CD8-positive, alpha-beta T cell (primary cell): ENCODE measurements at regions of chr3 and their contacts with region 1.

Region 1: GRCh38 chr3:153161138-153161713 is 800 bp upstream of the RAP2B start:
- DNase-seq: peak; percentile 79 to 97 (median 90)
- ATAC-seq: peak; percentile 78
- H3K4me3 ChIP-seq: peak overlapping the region; percentile 69 to 75
- H3K4me3 Mint-ChIP-seq: peak overlapping the region; percentile 99
- H3K27ac ChIP-seq: peak overlapping the region; percentile 62 to 74
- H3K27ac Mint-ChIP-seq: peak overlapping the region; percentile 95
- H3K4me1 ChIP-seq: peaks cover 24% of the 10 kb centered on the region
- H3K4me1 Mint-ChIP-seq: peaks cover 34% of the 10 kb centered on the region
- H3K27me3 ChIP-seq: no peaks in the 10 kb centered on the region
- H3K27me3 Mint-ChIP-seq: no peaks in the 10 kb centered on the region
- CTCF ChIP-seq: no peak

Region 2: DNA sequence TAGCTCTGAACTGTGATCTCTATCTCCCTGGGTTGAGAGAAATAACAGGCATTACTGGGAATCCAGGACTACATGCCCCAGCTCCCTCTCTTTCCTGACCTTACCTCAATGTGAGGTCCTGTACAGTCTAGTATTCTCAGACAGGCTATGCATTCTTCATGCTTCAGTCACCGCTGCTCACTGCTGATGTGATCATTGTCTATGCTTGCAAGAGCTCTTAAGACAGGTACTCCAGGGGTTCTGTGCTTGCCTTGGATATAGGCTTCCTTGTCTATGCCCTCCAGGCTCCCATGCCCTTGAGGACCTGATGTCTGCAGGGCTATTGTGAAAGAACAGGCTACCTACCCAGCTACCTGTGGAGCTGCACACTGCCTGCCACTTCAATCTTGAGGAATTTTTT is 708.9 kb before region 1 on chr3:
- CTCF ChIA-PET with region 1: no interaction called
- POLR2A ChIA-PET with region 1: no interaction called
- intact Hi-C with region 1: no loop called
- DNase-seq: no peak
- ATAC-seq: no peak
- H3K4me3 ChIP-seq: no peak overlapping the region
- H3K4me3 Mint-ChIP-seq: no peak overlapping the region
- H3K27ac ChIP-seq: peak overlapping the region in 1 of 2 experiments; percentile 23
- H3K27ac Mint-ChIP-seq: peak overlapping the region; percentile 72
- H3K4me1 ChIP-seq: peaks cover 31% of the 10 kb centered on the region
- H3K4me1 Mint-ChIP-seq: peaks cover 56% of the 10 kb centered on the region
- H3K27me3 ChIP-seq: no peaks in the 10 kb centered on the region
- H3K27me3 Mint-ChIP-seq: no peaks in the 10 kb centered on the region
- CTCF ChIP-seq: no peak

Region 3: GRCh38 chr3:152606146-152606545 is 555.1 kb before region 1 on chr3:
- CTCF ChIA-PET with region 1: no interaction called
- POLR2A ChIA-PET with region 1: no interaction called
- intact Hi-C with region 1: no loop called
- DNase-seq: no peak
- ATAC-seq: no peak
- H3K4me3 ChIP-seq: no peak overlapping the region
- H3K4me3 Mint-ChIP-seq: no peak overlapping the region
- H3K27ac ChIP-seq: no peak overlapping the region
- H3K27ac Mint-ChIP-seq: no peak overlapping the region
- H3K4me1 ChIP-seq: no peaks in the 10 kb centered on the region
- H3K4me1 Mint-ChIP-seq: no peaks in the 10 kb centered on the region
- H3K27me3 ChIP-seq: no peaks in the 10 kb centered on the region
- H3K27me3 Mint-ChIP-seq: no peaks in the 10 kb centered on the region
- CTCF ChIP-seq: no peak

Region 4: GRCh38 chr3:153043729-153044328 is 117.4 kb before region 1 on chr3:
- CTCF ChIA-PET with region 1: interaction called, 12 read pairs
- POLR2A ChIA-PET with region 1: interaction called, 4 read pairs
- intact Hi-C with region 1: loop called (anchors 1 to 5 kb)
- DNase-seq: no peak
- ATAC-seq: no peak
- H3K4me3 ChIP-seq: no peak overlapping the region
- H3K4me3 Mint-ChIP-seq: no peak overlapping the region
- H3K27ac ChIP-seq: no peak overlapping the region
- H3K27ac Mint-ChIP-seq: no peak overlapping the region
- H3K4me1 ChIP-seq: no peaks in the 10 kb centered on the region
- H3K4me1 Mint-ChIP-seq: peaks cover 2% of the 10 kb centered on the region
- H3K27me3 ChIP-seq: no peaks in the 10 kb centered on the region
- H3K27me3 Mint-ChIP-seq: peaks cover 5% of the 10 kb centered on the region
- CTCF ChIP-seq: no peak

Region 5: DNA sequence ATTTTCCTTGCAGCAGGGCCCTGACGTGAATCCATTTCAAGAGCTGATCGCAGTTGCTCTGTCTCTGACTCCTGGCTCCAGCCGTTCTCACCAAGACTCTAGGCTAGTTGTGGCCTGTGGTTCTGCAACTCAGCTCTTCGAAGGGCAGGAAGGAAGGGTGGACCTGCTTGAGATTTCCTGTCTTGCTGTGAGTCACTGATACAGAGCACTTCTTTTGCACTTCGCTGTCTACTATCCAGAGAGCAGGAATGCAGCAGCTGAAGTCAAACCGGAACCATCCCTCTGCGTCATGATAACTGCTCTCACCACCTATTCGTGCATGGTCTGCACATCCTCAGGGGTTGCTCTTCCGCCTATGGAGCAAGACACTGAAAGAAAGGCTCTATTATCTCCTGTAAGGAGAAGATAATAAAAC is 60.5 kb after region 1 on chr3:
- CTCF ChIA-PET with region 1: interaction called, 5 read pairs
- POLR2A ChIA-PET with region 1: interaction called, 51 read pairs
- intact Hi-C with region 1: loop called (anchors 1 to 2 kb)
- DNase-seq: peak; percentile 62 to 96 (median 81)
- ATAC-seq: peak; percentile 93
- H3K4me3 ChIP-seq: peak overlapping the region; percentile 3 to 10
- H3K4me3 Mint-ChIP-seq: peak overlapping the region; percentile 67
- H3K27ac ChIP-seq: peak overlapping the region; percentile 64 to 96
- H3K27ac Mint-ChIP-seq: peak overlapping the region; percentile 94
- H3K4me1 ChIP-seq: peaks cover 68% of the 10 kb centered on the region
- H3K4me1 Mint-ChIP-seq: peaks cover 68% of the 10 kb centered on the region
- H3K27me3 ChIP-seq: no peaks in the 10 kb centered on the region
- H3K27me3 Mint-ChIP-seq: no peaks in the 10 kb centered on the region
- CTCF ChIP-seq: no peak

Region 6: GRCh38 chr3:153574445-153574844 is 413.2 kb after region 1 on chr3:
- CTCF ChIA-PET with region 1: no interaction called
- POLR2A ChIA-PET with region 1: no interaction called
- intact Hi-C with region 1: no loop called
- DNase-seq: no peak
- ATAC-seq: no peak
- H3K4me3 ChIP-seq: no peak overlapping the region
- H3K4me3 Mint-ChIP-seq: no peak overlapping the region
- H3K27ac ChIP-seq: no peak overlapping the region
- H3K27ac Mint-ChIP-seq: no peak overlapping the region
- H3K4me1 ChIP-seq: no peaks in the 10 kb centered on the region
- H3K4me1 Mint-ChIP-seq: no peaks in the 10 kb centered on the region
- H3K27me3 ChIP-seq: no peaks in the 10 kb centered on the region
- H3K27me3 Mint-ChIP-seq: no peaks in the 10 kb centered on the region
- CTCF ChIP-seq: no peak

Region 7: GRCh38 chr3:153595186-153595815 is 434.1 kb after region 1 on chr3:
- CTCF ChIA-PET with region 1: interaction called, 3 read pairs
- POLR2A ChIA-PET with region 1: no interaction called
- intact Hi-C with region 1: loop called (anchors 2 to 5 kb)
- DNase-seq: peak in 2 of 9 experiments; percentile 38 to 49
- ATAC-seq: no peak
- H3K4me3 ChIP-seq: no peak overlapping the region
- H3K4me3 Mint-ChIP-seq: no peak overlapping the region
- H3K27ac ChIP-seq: no peak overlapping the region
- H3K27ac Mint-ChIP-seq: no peak overlapping the region
- H3K4me1 ChIP-seq: no peaks in the 10 kb centered on the region
- H3K4me1 Mint-ChIP-seq: peaks cover 6% of the 10 kb centered on the region
- H3K27me3 ChIP-seq: no peaks in the 10 kb centered on the region
- H3K27me3 Mint-ChIP-seq: no peaks in the 10 kb centered on the region
- CTCF ChIP-seq: peak; percentile 48

Region 8: DNA sequence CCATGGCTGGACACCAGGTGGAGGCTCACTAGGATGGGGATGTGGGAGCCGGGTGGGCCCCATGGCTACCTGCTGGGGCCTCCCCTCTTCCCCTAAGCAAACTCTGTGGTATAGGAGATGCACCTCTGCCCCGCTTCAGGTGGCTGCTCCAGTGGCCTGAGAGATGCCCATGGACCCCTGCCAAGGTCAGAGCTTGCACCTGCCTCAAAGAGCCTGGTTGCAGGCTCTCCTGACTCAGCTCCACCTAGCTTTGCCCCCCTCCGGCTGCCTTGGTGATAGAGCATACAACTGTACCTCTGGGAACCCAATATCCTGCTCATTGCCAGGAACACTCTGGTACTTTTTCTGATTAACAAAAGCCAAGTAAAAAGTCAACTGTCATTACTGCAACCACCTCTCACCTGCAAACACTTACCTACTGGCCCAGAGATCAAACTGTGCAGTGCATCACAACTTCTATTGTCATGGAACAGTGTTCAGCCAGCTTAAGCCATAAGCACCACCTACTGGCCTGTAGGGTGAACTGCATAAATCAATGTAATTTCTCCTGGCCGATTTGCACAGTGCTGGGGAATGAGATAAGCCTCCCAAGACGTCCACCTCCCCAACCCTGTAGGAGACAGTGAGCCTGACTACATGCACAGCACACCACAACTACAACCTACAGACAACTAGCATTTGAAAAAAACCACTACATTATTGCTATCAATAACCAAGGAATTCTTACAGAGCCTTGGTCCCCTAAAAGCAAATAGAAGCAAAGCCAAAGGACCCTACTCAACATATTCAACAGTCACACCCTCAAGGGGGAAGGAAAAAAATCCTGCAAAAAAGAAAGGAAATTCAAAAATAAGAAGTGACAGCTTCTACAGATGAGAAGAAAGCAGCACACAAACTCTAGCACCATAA is 607.6 kb after region 1 on chr3:
- CTCF ChIA-PET with region 1: interaction called, 8 read pairs
- POLR2A ChIA-PET with region 1: no interaction called
- intact Hi-C with region 1: loop called in 1 of 2 experiments (anchors 1 kb)
- DNase-seq: peak in 8 of 9 experiments; percentile 24 to 75 (median 46)
- ATAC-seq: peak; percentile 98
- H3K4me3 ChIP-seq: no peak overlapping the region
- H3K4me3 Mint-ChIP-seq: no peak overlapping the region
- H3K27ac ChIP-seq: no peak overlapping the region
- H3K27ac Mint-ChIP-seq: no peak overlapping the region
- H3K4me1 ChIP-seq: no peaks in the 10 kb centered on the region
- H3K4me1 Mint-ChIP-seq: no peaks in the 10 kb centered on the region
- H3K27me3 ChIP-seq: no peaks in the 10 kb centered on the region
- H3K27me3 Mint-ChIP-seq: peaks cover 16% of the 10 kb centered on the region
- CTCF ChIP-seq: peak; percentile 81